Calu3 (cell line): ENCODE measurements at regions of chrX and their contacts with region 1.

Region 1: DNA sequence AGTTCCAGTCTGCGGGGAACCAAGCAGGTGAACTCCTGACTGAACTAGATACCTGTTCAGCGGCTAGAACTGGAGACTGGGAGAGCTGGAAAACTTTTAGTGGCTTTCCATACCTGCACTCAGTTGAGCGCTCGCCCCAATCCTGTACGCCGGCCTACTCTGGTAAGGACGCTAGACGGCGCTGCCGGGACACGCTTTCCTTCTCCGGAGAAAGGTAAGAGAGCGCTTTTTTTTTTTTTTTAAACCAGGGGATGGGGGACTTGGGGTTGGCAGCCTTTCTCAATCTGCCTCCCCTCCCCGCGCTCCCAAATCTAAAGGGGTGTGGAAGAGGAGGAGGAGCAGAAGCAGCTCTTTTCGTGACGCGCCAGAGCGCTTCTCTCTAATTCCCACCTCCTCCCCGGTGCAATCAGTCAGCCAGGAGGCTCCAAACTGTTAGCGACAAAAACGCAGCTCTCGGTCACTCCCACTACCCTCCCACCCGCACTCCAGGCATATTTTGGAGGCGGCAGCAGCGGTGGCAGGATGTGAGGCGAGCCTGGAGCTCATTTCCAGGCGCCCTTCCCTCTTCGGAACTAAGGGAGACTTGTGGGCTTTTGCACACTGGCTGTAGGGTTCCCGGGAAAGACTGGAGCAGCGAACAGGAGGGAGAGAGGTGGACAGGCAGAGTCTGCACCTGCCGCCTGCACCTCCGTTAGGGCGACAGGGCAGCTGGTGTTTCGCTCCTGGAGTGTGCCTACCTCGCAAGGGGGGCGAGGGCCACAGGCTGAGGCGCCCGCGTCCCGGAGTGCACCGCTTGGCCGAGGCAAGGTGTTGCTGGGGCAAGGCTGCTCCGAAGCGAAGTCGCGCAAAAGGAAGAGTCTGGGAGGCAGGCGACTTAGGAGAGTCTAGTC is at the start of gene IL1RAPL2:
- DNase-seq: peak; percentile 68
- H3K4me3 Mint-ChIP-seq: peak within 1 kb of the TSS; percentile 76
- H3K27ac Mint-ChIP-seq: no peak within 1 kb of the TSS
- H3K4me1 Mint-ChIP-seq: no peaks in the 10 kb centered on the region
- H3K27me3 Mint-ChIP-seq: peaks cover 74% of the 10 kb centered on the region
- CTCF ChIP-seq: peak; percentile 68
- total RNA-seq, gene IL1RAPL2: not detected in 2 replicates

Region 2: GRCh38 chrX:104359164-104359563 is 206.9 kb before region 1 on chrX:
- CTCF ChIA-PET with region 1: no interaction called
- intact Hi-C with region 1: no loop called
- DNase-seq: no peak
- H3K4me3 Mint-ChIP-seq: no peak overlapping the region
- H3K27ac Mint-ChIP-seq: no peak overlapping the region
- H3K4me1 Mint-ChIP-seq: no peaks in the 10 kb centered on the region
- H3K27me3 Mint-ChIP-seq: peaks cover 13% of the 10 kb centered on the region
- CTCF ChIP-seq: no peak

Region 3: GRCh38 chrX:104712515-104712914 is 146.5 kb after region 1 on chrX:
- CTCF ChIA-PET with region 1: interaction called, 8 read pairs
- intact Hi-C with region 1: loop called (anchors 1 kb)
- DNase-seq: no peak
- H3K4me3 Mint-ChIP-seq: no peak overlapping the region
- H3K27ac Mint-ChIP-seq: no peak overlapping the region
- H3K4me1 Mint-ChIP-seq: no peaks in the 10 kb centered on the region
- H3K27me3 Mint-ChIP-seq: peaks cover 22% of the 10 kb centered on the region
- CTCF ChIP-seq: no peak

Region 4: GRCh38 chrX:104877504-104877903 is 311.5 kb after region 1 on chrX:
- CTCF ChIA-PET with region 1: no interaction called
- intact Hi-C with region 1: no loop called
- DNase-seq: no peak
- H3K4me3 Mint-ChIP-seq: no peak overlapping the region
- H3K27ac Mint-ChIP-seq: no peak overlapping the region
- H3K4me1 Mint-ChIP-seq: no peaks in the 10 kb centered on the region
- H3K27me3 Mint-ChIP-seq: no peaks in the 10 kb centered on the region
- CTCF ChIP-seq: no peak

Region 5: DNA sequence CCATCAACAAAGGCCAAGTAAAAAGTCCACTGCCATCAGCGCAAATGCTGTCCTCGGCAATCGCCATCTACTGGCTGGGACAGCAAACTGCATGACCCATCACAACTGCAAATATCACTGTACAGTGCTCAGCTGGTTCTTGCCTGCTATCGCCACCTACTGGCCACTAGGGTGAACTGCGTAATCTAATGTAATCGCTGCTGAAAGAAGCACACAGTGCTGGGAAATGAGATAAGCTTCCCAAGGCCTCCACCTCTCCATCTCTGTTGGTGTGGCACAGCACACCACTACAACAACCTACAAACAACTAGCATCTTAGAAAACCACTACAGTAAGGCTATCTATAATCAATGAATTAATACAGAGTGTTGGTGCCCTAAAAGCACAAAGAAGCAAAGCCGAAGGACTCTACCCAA is 356.2 kb after region 1 on chrX:
- CTCF ChIA-PET with region 1: interaction called, 4 read pairs
- intact Hi-C with region 1: loop called (anchors 2 kb)
- DNase-seq: peak; percentile 80
- H3K4me3 Mint-ChIP-seq: no peak overlapping the region
- H3K27ac Mint-ChIP-seq: no peak overlapping the region
- H3K4me1 Mint-ChIP-seq: no peaks in the 10 kb centered on the region
- H3K27me3 Mint-ChIP-seq: no peaks in the 10 kb centered on the region
- CTCF ChIP-seq: peak; percentile 94

Region 6: DNA sequence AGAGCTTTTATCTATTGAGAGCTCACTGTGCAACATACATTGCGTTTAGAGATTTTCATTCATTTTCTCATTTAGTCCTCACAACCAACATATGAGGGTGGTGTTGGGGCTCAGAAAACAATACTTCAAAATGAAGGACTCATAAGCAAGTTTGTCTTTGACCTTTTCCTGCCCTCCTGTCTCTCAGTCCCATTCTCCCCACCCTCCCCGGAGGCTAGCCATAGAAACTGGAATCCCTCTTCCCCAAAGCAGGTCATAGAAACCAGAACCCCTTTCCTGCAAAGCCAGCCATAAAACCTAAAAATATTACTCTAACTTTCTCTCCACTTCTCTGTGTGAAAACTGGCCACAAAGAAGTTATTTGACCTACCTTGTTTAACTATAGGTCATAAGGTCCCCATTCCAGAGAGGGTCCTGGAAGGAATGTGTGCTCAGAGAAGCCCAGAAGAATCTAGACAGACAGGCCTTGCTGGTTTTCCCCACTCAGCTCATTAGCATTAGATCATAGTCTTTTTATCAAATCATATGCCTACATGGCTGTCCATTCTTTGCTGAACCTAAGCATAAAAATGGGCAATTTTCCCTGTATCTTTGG is 707.2 kb after region 1 on chrX:
- CTCF ChIA-PET with region 1: no interaction called
- intact Hi-C with region 1: no loop called
- DNase-seq: no peak
- H3K4me3 Mint-ChIP-seq: no peak overlapping the region
- H3K27ac Mint-ChIP-seq: no peak overlapping the region
- H3K4me1 Mint-ChIP-seq: no peaks in the 10 kb centered on the region
- H3K27me3 Mint-ChIP-seq: no peaks in the 10 kb centered on the region
- CTCF ChIP-seq: no peak

Region 7: DNA sequence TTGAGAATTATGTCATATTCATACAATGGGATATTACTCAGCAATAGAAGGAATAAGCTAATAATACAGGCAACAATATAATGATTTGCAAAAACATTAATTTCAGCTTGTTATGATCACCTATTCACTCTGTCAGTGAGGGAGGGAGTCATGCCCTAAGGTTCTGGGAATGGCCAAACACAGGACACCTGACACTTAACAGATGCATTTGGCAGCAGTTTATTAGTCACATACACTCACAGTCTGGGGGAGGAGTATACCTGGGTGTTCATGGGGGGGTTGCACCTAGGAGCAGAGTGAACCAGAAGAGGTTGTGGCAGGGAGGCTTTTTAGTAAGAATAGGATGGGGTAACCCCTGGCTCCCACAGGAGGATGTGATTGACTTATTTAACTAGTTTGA is 1434.2 kb after region 1 on chrX:
- CTCF ChIA-PET with region 1: no interaction called
- intact Hi-C with region 1: no loop called
- DNase-seq: no peak
- H3K4me3 Mint-ChIP-seq: no peak overlapping the region
- H3K27ac Mint-ChIP-seq: no peak overlapping the region
- H3K4me1 Mint-ChIP-seq: no peaks in the 10 kb centered on the region
- H3K27me3 Mint-ChIP-seq: no peaks in the 10 kb centered on the region
- CTCF ChIP-seq: no peak